K562 (cell line): ENCODE measurements at regions of chr2 and their contacts with region 1.

Region 1: GRCh38 chr2:165401285-165401852 is 68.1 kb upstream of the CSRNP3 start:
- DNase-seq: peak; percentile 8 to 58 (median 20)
- ATAC-seq: peak; percentile 56; the same call in 2 of the 3 replicates
- H3K4me3 ChIP-seq: no peak overlapping the region
- H3K27ac ChIP-seq: no peak overlapping the region
- H3K4me1 ChIP-seq: no peaks in the 10 kb centered on the region
- H3K27me3 ChIP-seq: no peaks in the 10 kb centered on the region
- CTCF ChIP-seq: peak; percentile 17 to 67 (median 55); a peak in 5 of 6 replicates
- EP300 ChIP-seq: no peak
- POLR2A ChIP-seq: no peak
- RAD21 ChIP-seq: peak; percentile 47 to 71

Region 2: GRCh38 chr2:165874445-165875039 is 473.2 kb after region 1 on chr2:
- CTCF ChIA-PET with region 1: interaction called, 4 read pairs
- POLR2A ChIA-PET with region 1: no interaction called
- in situ Hi-C with region 1: no loop called
- intact Hi-C with region 1: loop called (anchors 1 kb)
- DNase-seq: peak; percentile 22 to 43 (median 34)
- ATAC-seq: peak; percentile 89
- H3K4me3 ChIP-seq: no peak overlapping the region
- H3K27ac ChIP-seq: no peak overlapping the region
- H3K4me1 ChIP-seq: no peaks in the 10 kb centered on the region
- H3K27me3 ChIP-seq: no peaks in the 10 kb centered on the region
- CTCF ChIP-seq: peak; percentile 29 to 60 (median 52); a peak in 5 of 6 replicates
- EP300 ChIP-seq: no peak
- POLR2A ChIP-seq: no peak
- RAD21 ChIP-seq: peak; percentile 55 to 60

Region 3: GRCh38 chr2:166106431-166107015 is 705.2 kb after region 1 on chr2:
- CTCF ChIA-PET with region 1: no interaction called
- POLR2A ChIA-PET with region 1: no interaction called
- in situ Hi-C with region 1: no loop called
- intact Hi-C with region 1: loop called (anchors 5 kb)
- DNase-seq: peak in 2 of 4 experiments; percentile 31 to 67
- ATAC-seq: peak; percentile 94
- H3K4me3 ChIP-seq: no peak overlapping the region
- H3K27ac ChIP-seq: no peak overlapping the region
- H3K4me1 ChIP-seq: no peaks in the 10 kb centered on the region
- H3K27me3 ChIP-seq: no peaks in the 10 kb centered on the region
- CTCF ChIP-seq: peak; percentile 62 to 68 (median 64)
- EP300 ChIP-seq: no peak
- POLR2A ChIP-seq: no peak
- RAD21 ChIP-seq: peak; percentile 31 to 65